MCF 10A (cell line): ENCODE measurements at regions of chr22 and their contacts with region 1.

Region 1: GRCh38 chr22:40044102-40044869 is 49.5 kb downstream of the FAM83F start:
- DNase-seq: peak; percentile 99
- H3K4me3 Mint-ChIP-seq: peak overlapping the region; percentile 87
- H3K27ac Mint-ChIP-seq: peak overlapping the region; percentile 95
- H3K4me1 Mint-ChIP-seq: peaks cover 52% of the 10 kb centered on the region
- H3K27me3 Mint-ChIP-seq: no peaks in the 10 kb centered on the region
- CTCF ChIP-seq: no peak

Region 2: DNA sequence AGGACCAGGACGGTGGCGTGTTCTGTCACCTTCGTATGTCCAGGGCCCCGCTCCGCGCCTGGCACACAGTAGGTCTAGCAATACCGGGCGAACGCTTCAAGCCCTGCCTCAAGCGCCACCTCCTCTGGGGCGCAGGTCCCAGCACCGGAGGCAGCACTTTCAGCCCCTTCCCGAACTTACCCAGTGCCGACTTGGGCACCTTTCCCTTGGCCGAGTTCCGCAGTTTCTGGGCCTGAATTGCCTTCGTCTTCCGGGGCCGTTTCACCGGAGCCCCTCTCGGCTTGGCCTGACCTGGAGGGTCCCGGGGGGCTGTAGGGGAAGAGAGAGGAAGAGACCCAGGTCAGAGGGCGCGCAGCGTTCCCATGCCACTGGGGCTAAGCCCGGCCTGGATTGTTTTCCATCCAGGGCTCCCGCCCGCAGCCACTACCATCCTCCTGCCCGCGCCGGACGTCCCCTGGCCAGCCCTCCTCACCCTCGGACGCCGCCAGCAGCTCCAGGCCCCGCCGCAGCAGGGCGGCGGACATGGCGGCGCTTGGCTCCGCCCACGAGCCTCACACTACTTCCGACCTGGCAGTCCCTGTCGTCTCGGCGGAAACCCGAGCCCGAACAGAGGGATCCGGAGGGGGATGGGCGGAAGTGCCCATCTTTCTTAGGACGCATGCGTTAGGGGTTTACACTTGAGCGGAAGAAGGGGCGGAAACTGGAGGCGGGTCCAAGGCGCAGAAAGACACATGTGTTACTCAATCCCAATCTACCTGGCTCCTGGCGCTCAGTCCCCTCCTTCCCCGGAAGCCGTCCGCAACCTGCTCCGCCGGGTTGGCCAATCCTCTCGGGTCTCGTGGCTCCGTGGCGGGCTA is 511.8 kb before region 1 on chr22 and contains the start of gene RPS19BP1:
- CTCF ChIA-PET with region 1: interaction called, 471 read pairs
- POLR2A ChIA-PET with region 1: interaction called, 29 read pairs
- intact Hi-C with region 1: loop called (anchors 5 kb)
- DNase-seq: peak; percentile 100
- H3K4me3 Mint-ChIP-seq: peak within 1 kb of the TSS; percentile 97
- H3K27ac Mint-ChIP-seq: peak within 1 kb of the TSS; percentile 87
- H3K4me1 Mint-ChIP-seq: peaks cover 44% of the 10 kb centered on the region
- H3K27me3 Mint-ChIP-seq: no peaks in the 10 kb centered on the region
- CTCF ChIP-seq: no peak
- total RNA-seq, gene RPS19BP1: 104 and 106 TPM in 2 replicates

Region 3: DNA sequence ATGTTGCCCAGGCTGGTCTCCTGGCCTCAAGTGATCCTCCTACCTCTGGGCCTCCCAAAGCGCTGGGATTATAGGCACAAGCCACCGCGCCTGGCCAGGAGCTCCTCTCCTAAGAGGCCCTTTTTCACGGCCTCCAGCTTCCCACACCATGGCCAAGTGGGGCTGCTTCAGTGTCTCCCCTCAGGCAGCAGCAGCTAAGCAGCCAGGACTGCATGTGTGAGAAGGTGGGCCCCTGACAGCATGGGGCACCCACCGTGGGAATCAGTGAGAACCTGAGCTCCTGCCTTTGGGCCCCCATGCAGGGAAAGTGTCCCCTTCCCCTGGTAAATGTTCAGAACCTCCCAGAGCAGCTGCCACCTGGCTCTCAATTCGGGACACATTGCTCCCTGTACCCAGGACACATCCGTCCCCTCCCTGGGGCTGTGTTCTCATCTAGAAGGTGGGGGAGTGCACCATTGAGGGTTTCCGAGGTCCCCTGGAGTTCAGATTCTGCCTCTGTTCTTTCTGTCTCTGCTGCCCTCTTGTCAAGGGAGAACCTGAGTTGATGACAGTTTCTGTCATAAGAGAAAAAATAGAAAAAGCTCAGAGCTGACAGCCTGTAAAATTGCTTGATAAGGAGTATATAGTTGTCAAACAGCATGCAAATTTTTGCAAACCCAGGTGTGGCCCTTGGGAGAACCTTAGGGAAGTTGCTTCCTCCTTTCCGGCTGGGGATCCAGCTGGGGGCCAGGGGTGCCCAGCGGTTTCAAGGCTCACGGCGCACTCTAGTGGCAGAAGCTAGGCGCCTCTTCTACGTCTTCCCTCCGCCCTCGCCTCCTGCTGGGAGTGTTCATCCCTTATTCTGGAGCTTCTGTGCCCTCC is 19.9 kb before region 1 on chr22:
- CTCF ChIA-PET with region 1: interaction called, 115 read pairs
- POLR2A ChIA-PET with region 1: interaction called, 10 read pairs
- intact Hi-C with region 1: no loop called
- DNase-seq: peak; percentile 73
- H3K4me3 Mint-ChIP-seq: no peak overlapping the region
- H3K27ac Mint-ChIP-seq: no peak overlapping the region
- H3K4me1 Mint-ChIP-seq: peaks cover 7% of the 10 kb centered on the region
- H3K27me3 Mint-ChIP-seq: no peaks in the 10 kb centered on the region
- CTCF ChIP-seq: peak; percentile 93

Region 4: GRCh38 chr22:40107851-40108378 is 63.6 kb after region 1 on chr22:
- CTCF ChIA-PET with region 1: interaction called, 3 read pairs
- POLR2A ChIA-PET with region 1: interaction called, 27 read pairs
- intact Hi-C with region 1: no loop called
- DNase-seq: peak; percentile 36
- H3K4me3 Mint-ChIP-seq: peak overlapping the region; percentile 56
- H3K27ac Mint-ChIP-seq: peak overlapping the region; percentile 39
- H3K4me1 Mint-ChIP-seq: peaks cover 21% of the 10 kb centered on the region
- H3K27me3 Mint-ChIP-seq: no peaks in the 10 kb centered on the region
- CTCF ChIP-seq: no peak

Region 5: GRCh38 chr22:40177738-40178416 is 133.6 kb after region 1 on chr22 and contains the start of gene TNRC6B:
- CTCF ChIA-PET with region 1: interaction called, 3 read pairs
- POLR2A ChIA-PET with region 1: interaction called, 171 read pairs
- intact Hi-C with region 1: loop called (anchors 2 kb)
- DNase-seq: peak; percentile 98
- H3K4me3 Mint-ChIP-seq: peak within 1 kb of the TSS; percentile 67
- H3K27ac Mint-ChIP-seq: peak within 1 kb of the TSS; percentile 80
- H3K4me1 Mint-ChIP-seq: peaks cover 35% of the 10 kb centered on the region
- H3K27me3 Mint-ChIP-seq: no peaks in the 10 kb centered on the region
- CTCF ChIP-seq: no peak
- total RNA-seq, gene TNRC6B: 27.1 and 39.3 TPM in 2 replicates

Region 6: DNA sequence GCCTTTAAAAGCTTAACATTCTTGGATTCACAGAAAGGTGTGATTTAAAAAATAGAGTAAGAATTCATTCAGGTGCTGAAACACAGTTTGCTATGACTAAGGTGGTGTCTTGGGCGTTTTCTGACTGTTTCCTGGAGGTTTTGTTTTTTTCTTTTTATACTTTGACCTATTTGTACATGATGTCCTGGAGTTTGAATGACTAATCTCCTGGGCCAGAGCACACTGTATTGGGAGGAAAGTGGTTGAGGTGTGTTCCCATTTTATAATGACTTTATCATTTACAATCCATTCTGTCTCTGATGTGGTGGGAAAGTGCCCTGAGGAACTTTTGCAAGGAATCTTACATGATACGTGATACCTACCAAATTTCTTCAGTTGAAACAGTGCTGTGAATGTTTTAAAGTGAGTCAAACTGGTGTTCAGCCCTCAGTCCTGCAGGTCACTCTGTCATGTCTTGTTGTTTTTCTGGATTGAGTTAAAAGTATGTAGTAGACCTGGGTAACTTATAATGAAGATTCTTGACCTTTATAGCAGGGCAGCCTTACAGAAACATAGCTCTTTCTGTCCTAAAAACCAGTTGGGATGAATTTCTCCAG is 214.3 kb after region 1 on chr22:
- CTCF ChIA-PET with region 1: no interaction called
- POLR2A ChIA-PET with region 1: interaction called, 24 read pairs
- intact Hi-C with region 1: no loop called
- DNase-seq: peak; percentile 91
- H3K4me3 Mint-ChIP-seq: peak overlapping the region; percentile 51
- H3K27ac Mint-ChIP-seq: peak overlapping the region; percentile 93
- H3K4me1 Mint-ChIP-seq: peaks cover 44% of the 10 kb centered on the region
- H3K27me3 Mint-ChIP-seq: no peaks in the 10 kb centered on the region
- CTCF ChIP-seq: no peak